ENCODE measurements at regions of chr3 and their contacts with region 1.

Region 1: GRCh38 chr3:194521514-194522260 is 34.9 kb upstream of the ATP13A3 start:
- DNase-seq: no peak
- ATAC-seq: peak in 2 of 8 donors; percentile 22 to 43
- H3K4me3 ChIP-seq: no peak overlapping the region
- H3K27ac ChIP-seq: peak overlapping the region in 1 of 10 donors; percentile 59
- H3K4me1 ChIP-seq: peaks cover 0 to 36% (median 8%) of the 10 kb centered on the region in 9 donors
- H3K27me3 ChIP-seq: no peaks in the 10 kb centered on the region
- CTCF ChIP-seq: no peak

Region 2: DNA sequence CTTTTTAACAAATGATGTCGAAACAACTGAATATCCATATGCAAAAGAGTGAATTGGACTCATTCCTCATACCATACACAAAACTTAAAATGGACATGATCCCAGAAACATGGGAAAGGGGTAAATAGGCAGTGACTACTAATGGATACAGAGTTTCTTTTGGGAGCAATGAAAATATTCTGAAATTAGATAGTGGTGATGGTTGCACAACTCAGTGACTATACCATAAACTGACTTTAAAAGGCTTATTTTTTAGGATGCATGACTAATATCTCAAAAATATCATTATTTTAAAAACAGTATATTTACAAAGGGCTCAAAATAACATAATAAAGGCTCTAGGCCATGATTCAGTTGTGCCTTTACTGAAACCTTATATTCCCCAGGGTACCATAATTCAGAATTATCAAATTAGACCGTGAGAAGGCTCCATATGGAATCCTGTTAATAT is 18.6 kb before region 1 on chr3:
- intact Hi-C with region 1: loop called in 1 of 10 experiments (anchors 2 kb)
- DNase-seq: no peak
- ATAC-seq: no peak
- H3K4me3 ChIP-seq: no peak overlapping the region
- H3K27ac ChIP-seq: no peak overlapping the region
- H3K4me1 ChIP-seq: peaks cover 0 to 9% (median 2%) of the 10 kb centered on the region in 9 donors
- H3K27me3 ChIP-seq: no peaks in the 10 kb centered on the region
- CTCF ChIP-seq: no peak

Region 3: GRCh38 chr3:195458316-195458717 is 936.6 kb after region 1 on chr3:
- intact Hi-C with region 1: no loop called
- DNase-seq: no peak
- ATAC-seq: peak in 4 of 8 donors; percentile 20 to 52 (median 34)
- H3K4me3 ChIP-seq: no peak overlapping the region
- H3K27ac ChIP-seq: peak overlapping the region in 1 of 10 donors; percentile 68
- H3K4me1 ChIP-seq: peaks cover 0 to 15% (median 0%) of the 10 kb centered on the region in 9 donors
- H3K27me3 ChIP-seq: no peaks in the 10 kb centered on the region
- CTCF ChIP-seq: no peak

Measured in heart right ventricle (tissue), 16 donors.